ENCODE measurements at regions of chr17 and their contacts with region 1.

Region 1: GRCh38 chr17:64174686-64175456 is 44.9 kb upstream of the ERN1 start:
- DNase-seq: no peak
- H3K4me3 ChIP-seq: no peak overlapping the region
- H3K27ac ChIP-seq: peak overlapping the region in 2 of 4 donors; percentile 35 to 38
- H3K4me1 ChIP-seq: peaks cover 0 to 2% (median 0%) of the 10 kb centered on the region in 4 donors
- H3K27me3 ChIP-seq: no peaks in the 10 kb centered on the region
- CTCF ChIP-seq: no peak
- EP300 ChIP-seq: no peak
- POLR2A ChIP-seq: peak; percentile 25

Region 2: DNA sequence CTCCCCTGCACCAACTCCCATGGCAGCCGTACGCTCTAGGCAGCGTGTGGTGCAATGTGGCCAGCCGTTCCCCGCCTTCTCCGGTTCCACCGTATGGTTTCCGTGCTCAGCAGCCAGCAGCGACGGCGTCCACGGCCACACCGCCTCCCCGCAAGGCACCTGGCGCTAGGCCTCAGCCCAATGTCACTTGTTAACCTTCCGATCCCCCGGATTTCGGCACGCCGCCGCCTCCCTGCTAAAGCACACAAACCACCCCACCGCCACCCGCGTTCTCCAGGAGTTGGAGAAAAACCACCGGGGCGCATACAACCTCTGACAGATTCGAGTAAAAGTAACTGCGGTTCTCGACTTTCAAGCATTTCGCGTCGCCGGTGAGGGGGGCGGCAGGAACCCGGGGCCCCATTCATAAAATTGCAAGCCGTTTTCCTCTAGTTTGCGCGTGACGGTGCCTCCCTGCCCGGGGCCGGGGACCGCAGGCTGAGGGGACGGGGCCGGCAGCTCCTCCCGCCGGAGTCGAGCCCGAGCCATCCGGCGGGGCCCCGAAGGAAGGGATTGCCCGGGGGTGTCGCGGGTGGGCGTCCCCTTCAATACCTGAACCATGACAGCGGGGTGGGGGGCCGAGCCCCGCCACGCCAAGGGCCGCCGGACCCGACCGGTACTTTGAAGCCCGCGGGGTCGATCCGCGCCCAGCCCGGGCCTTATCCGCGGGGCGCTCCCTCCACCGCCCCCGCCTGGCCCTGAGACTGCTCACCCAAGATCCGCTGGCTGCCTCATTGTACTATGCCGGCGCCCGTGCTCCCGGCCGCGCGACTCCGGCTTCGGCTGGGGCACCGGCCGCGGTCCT is 87.8 kb after region 1 on chr17 and contains the start of gene TEX2:
- in situ Hi-C with region 1: loop called in 1 of 4 experiments (anchors 25 kb)
- intact Hi-C with region 1: no loop called
- DNase-seq: peak; percentile 66
- H3K4me3 ChIP-seq: peak within 1 kb of the TSS; percentile 88 to 99 (median 93)
- H3K27ac ChIP-seq: peak within 1 kb of the TSS; percentile 94 to 97 (median 96)
- H3K4me1 ChIP-seq: peaks cover 17 to 35% (median 29%) of the 10 kb centered on the region in 4 donors
- H3K27me3 ChIP-seq: peaks cover 9% of the 10 kb centered on the region
- CTCF ChIP-seq: no peak
- EP300 ChIP-seq: no peak
- POLR2A ChIP-seq: peak; percentile 65
- total RNA-seq, gene TEX2: 12.3 to 137 (median 30.3) TPM

Measured in transverse colon (tissue), 4 donors.